Heart left ventricle (tissue), 16 donors: ENCODE measurements at regions of chr10 and their contacts with region 1.

Region 1: GRCh38 chr10:13928451-13928850 is 341.7 kb downstream of the PRPF18 start:
- DNase-seq: no peak
- ATAC-seq: no peak
- H3K4me3 ChIP-seq: no peak overlapping the region
- H3K27ac ChIP-seq: no peak overlapping the region
- H3K4me1 ChIP-seq: peaks cover 0 to 9% (median 1%) of the 10 kb centered on the region in 12 donors
- H3K27me3 ChIP-seq: no peaks in the 10 kb centered on the region
- CTCF ChIP-seq: no peak
- POLR2A ChIP-seq: no peak

Region 2: DNA sequence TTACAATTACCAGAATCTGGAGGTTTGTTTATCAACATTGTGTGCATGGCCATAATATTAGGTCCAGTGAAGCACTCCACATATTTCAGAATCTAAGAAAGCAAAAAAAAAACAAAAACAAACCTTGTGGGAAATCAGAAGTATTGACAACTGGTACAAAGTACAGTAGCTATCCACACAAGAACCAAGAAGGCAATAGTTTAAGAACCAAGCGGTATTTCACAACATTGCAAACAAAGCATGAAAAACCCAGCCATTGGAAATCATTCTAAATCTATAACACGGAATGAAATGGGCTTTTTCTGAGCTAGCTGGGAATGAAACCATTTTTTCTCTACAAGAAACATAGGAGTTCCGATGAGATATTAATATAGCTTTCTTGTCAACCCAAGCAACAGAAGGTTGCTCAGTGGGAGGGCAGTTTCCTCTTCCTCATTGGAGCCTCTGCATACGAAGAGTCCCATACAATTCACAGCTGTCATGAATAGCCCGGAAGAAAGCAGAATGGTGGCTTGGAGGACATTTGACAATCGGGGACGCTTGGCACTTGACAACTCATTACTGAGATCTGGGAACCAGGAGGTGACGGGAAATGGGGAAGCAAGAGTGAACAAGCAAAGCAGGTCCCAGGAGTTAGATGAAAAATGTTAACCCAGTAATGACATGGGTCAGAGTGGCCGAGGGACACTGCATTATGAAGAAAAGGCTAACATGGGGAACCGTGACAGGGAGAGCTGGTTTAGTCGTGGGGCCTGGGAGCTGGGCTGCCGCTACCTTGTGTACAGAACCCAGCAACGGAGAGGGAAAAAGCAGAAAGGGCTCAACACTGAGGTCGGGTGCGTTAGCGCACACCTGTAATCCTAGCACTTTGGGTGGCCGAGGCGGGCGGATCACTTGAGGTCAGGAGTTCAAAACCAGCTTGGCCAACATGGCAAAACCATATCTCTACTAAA is 636.4 kb before region 1 on chr10:
- intact Hi-C with region 1: no loop called
- DNase-seq: no peak
- ATAC-seq: no peak
- H3K4me3 ChIP-seq: no peak overlapping the region
- H3K27ac ChIP-seq: no peak overlapping the region
- H3K4me1 ChIP-seq: no peaks in the 10 kb centered on the region
- H3K27me3 ChIP-seq: no peaks in the 10 kb centered on the region
- CTCF ChIP-seq: no peak
- POLR2A ChIP-seq: no peak

Region 3: GRCh38 chr10:13913897-13914296 is 14.6 kb before region 1 on chr10:
- intact Hi-C with region 1: loop called in 1 of 10 experiments (anchors 2 kb)
- DNase-seq: peak in 2 of 5 donors; percentile 27 to 49
- ATAC-seq: peak in 1 of 4 donors; percentile 59
- H3K4me3 ChIP-seq: no peak overlapping the region
- H3K27ac ChIP-seq: no peak overlapping the region
- H3K4me1 ChIP-seq: peaks cover 0 to 10% (median 0%) of the 10 kb centered on the region in 12 donors
- H3K27me3 ChIP-seq: no peaks in the 10 kb centered on the region
- CTCF ChIP-seq: no peak
- POLR2A ChIP-seq: no peak

Region 4: GRCh38 chr10:14056610-14057332 is 128.3 kb after region 1 on chr10:
- intact Hi-C with region 1: no loop called
- DNase-seq: no peak
- ATAC-seq: peak in 1 of 4 donors; percentile 50
- H3K4me3 ChIP-seq: no peak overlapping the region
- H3K27ac ChIP-seq: no peak overlapping the region
- H3K4me1 ChIP-seq: peaks cover 0 to 3% (median 0%) of the 10 kb centered on the region in 12 donors
- H3K27me3 ChIP-seq: no peaks in the 10 kb centered on the region
- CTCF ChIP-seq: no peak
- POLR2A ChIP-seq: no peak